ENCODE measurements at regions of chr10 and their contacts with region 1.

Region 1: GRCh38 chr10:117174439-117175214 is 22.7 kb upstream of the KCNK18 start:
- DNase-seq: peak; percentile 82
- ATAC-seq: peak; percentile 93
- H3K4me3 ChIP-seq: no peak overlapping the region
- H3K27ac ChIP-seq: no peak overlapping the region
- H3K4me1 ChIP-seq: peaks cover 0 to 21% of the 10 kb centered on the region in 2 experiments; a peak in 3 of 4 replicates
- H3K27me3 ChIP-seq: peaks cover 13% of the 10 kb centered on the region; the same call in 1 of the 2 replicates
- CTCF ChIP-seq: peak; percentile 94 to 99 (median 97)
- POLR2A ChIP-seq: no peak
- RAD21 ChIP-seq: peak; percentile 98

Region 2: GRCh38 chr10:116470768-116471415 is 703.7 kb before region 1 on chr10:
- CTCF ChIA-PET with region 1: interaction called, 6 read pairs
- POLR2A ChIA-PET with region 1: no interaction called
- RAD21 ChIA-PET with region 1: no interaction called
- intact Hi-C with region 1: loop called (anchors 10 kb)
- DNase-seq: peak; percentile 33
- ATAC-seq: peak; percentile 99
- H3K4me3 ChIP-seq: no peak overlapping the region
- H3K27ac ChIP-seq: no peak overlapping the region
- H3K4me1 ChIP-seq: peaks cover 0 to 5% of the 10 kb centered on the region in 2 experiments; a peak in 2 of 4 replicates
- H3K27me3 ChIP-seq: peaks cover 15% of the 10 kb centered on the region
- CTCF ChIP-seq: peak; percentile 72 to 90 (median 84)
- POLR2A ChIP-seq: no peak
- RAD21 ChIP-seq: peak; percentile 79

Region 3: DNA sequence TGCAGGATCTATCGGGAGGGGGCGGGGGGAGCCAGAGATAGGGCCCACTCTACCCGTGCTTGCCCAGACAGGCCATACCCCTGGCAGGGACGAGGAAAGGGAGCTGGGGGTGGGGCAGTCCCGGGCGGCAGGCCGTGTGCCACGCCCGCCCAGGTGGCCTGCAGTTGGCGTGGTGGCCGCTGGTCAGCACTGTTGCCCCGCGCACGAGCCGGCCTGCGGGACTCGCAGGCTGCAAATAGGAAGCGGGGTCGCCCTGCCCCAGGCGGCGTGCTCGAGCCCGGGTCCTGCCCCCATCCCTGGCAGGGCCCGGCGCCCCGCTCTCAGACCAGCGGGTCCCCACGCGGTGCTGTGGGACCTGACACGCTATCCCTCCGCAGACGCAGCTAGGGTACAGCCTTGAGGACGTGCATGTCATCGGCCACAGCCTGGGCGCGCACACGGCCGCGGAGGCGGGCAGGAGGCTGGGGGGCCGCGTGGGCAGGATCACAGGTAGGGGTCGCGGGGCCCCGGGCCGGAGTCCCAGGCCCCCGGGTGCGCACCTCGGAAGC is 547.2 kb before region 1 on chr10:
- CTCF ChIA-PET with region 1: interaction called, 37 read pairs
- POLR2A ChIA-PET with region 1: interaction called, 3 read pairs
- RAD21 ChIA-PET with region 1: interaction called in 1 of 2 experiments, 5 read pairs
- intact Hi-C with region 1: loop called (anchors 2 kb)
- DNase-seq: peak; percentile 29
- ATAC-seq: peak; percentile 96
- H3K4me3 ChIP-seq: peak overlapping the region; percentile 38 to 50
- H3K27ac ChIP-seq: no peak overlapping the region
- H3K4me1 ChIP-seq: peaks cover 0 to 8% of the 10 kb centered on the region in 2 experiments; a peak in 1 of 4 replicates
- H3K27me3 ChIP-seq: no peaks in the 10 kb centered on the region
- CTCF ChIP-seq: peak; percentile 68 to 90 (median 76)
- POLR2A ChIP-seq: no peak
- RAD21 ChIP-seq: peak; percentile 94

Region 4: GRCh38 chr10:116779076-116779687 is 395.4 kb before region 1 on chr10:
- CTCF ChIA-PET with region 1: interaction called, 20 read pairs
- POLR2A ChIA-PET with region 1: no interaction called
- RAD21 ChIA-PET with region 1: no interaction called
- intact Hi-C with region 1: no loop called
- DNase-seq: peak; percentile 35
- ATAC-seq: peak; percentile 20; the same call in 1 of the 2 replicates
- H3K4me3 ChIP-seq: peak overlapping the region in 1 of 2 experiments; percentile 12; a peak in 1 of 4 replicates
- H3K27ac ChIP-seq: no peak overlapping the region
- H3K4me1 ChIP-seq: peaks cover 15 to 59% of the 10 kb centered on the region in 2 experiments
- H3K27me3 ChIP-seq: no peaks in the 10 kb centered on the region
- CTCF ChIP-seq: no peak
- POLR2A ChIP-seq: no peak
- RAD21 ChIP-seq: no peak

Region 5: GRCh38 chr10:116836902-116837523 is 337.6 kb before region 1 on chr10:
- CTCF ChIA-PET with region 1: interaction called, 12 read pairs
- POLR2A ChIA-PET with region 1: no interaction called
- RAD21 ChIA-PET with region 1: interaction called in 1 of 2 experiments, 3 read pairs
- intact Hi-C with region 1: no loop called
- DNase-seq: no peak
- ATAC-seq: no peak
- H3K4me3 ChIP-seq: no peak overlapping the region
- H3K27ac ChIP-seq: no peak overlapping the region
- H3K4me1 ChIP-seq: no peaks in the 10 kb centered on the region
- H3K27me3 ChIP-seq: no peaks in the 10 kb centered on the region
- CTCF ChIP-seq: peak in 1 of 3 experiments; percentile 57; a peak in 2 of 6 replicates
- POLR2A ChIP-seq: no peak
- RAD21 ChIP-seq: peak; percentile 77

Region 6: DNA sequence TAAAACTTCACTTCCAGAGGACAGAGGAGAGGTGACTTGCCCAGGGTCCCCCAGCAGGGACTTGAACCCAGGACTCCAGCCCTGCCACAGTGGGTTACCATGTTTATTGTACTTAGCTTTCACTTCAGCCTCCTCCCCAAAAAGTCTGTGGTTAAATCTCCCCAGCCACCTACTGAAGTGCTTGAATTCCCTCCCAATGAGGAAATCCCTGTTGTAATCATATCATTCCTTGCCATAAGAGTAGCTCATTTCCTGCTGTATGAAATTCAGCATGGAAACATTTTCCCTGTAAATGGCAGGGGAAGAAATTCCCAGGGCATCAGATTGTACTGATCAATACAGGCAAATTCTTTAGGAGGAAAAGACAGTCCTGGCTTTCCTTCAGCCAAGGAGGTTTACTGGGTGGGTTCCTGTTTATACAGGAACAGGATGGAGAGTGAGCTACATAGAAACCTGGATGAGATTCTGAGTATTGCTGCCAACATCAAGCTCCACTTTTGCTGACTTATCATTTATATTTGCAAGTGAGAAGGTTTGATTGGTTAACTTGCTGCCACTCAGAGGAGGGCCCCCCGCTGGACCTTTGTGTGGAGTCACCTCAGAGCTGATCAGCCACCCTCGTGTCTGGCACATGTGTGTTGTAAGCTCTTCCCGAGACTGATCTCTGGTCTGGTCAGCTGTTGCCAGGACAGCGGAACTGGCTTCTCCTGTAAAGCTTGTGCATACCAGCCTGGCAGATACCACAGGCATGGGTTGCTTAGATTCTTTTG is 217.0 kb after region 1 on chr10:
- CTCF ChIA-PET with region 1: no interaction called
- POLR2A ChIA-PET with region 1: no interaction called
- RAD21 ChIA-PET with region 1: no interaction called
- intact Hi-C with region 1: no loop called
- DNase-seq: no peak
- ATAC-seq: peak; percentile 36; the same call in 1 of the 2 replicates
- H3K4me3 ChIP-seq: no peak overlapping the region
- H3K27ac ChIP-seq: no peak overlapping the region
- H3K4me1 ChIP-seq: no peaks in the 10 kb centered on the region
- H3K27me3 ChIP-seq: peaks cover 24% of the 10 kb centered on the region
- CTCF ChIP-seq: no peak
- POLR2A ChIP-seq: no peak
- RAD21 ChIP-seq: no peak